SK-N-SH (cell line): ENCODE measurements at regions of chr17 and their contacts with region 1.

Region 1: GRCh38 chr17:44363613-44364159 is at the start of gene FAM171A2:
- DNase-seq: peak; percentile 97
- H3K4me3 ChIP-seq: peak within 1 kb of the TSS; percentile 80 to 89
- H3K27ac ChIP-seq: peak within 1 kb of the TSS in 1 of 2 experiments; percentile 76; a peak in 2 of 4 replicates
- H3K4me1 ChIP-seq: peaks cover 3 to 22% of the 10 kb centered on the region in 2 experiments; a peak in 1 of 4 replicates
- H3K27me3 ChIP-seq: no peaks in the 10 kb centered on the region; the same call in 1 of the 2 replicates
- CTCF ChIP-seq: peak; percentile 59
- EP300 ChIP-seq: no peak
- RAD21 ChIP-seq: peak; percentile 14; the same call in 1 of the 2 replicates
- polyA plus RNA-seq, gene FAM171A2: 4.8 and 4.9 TPM in 2 replicates

Region 2: DNA sequence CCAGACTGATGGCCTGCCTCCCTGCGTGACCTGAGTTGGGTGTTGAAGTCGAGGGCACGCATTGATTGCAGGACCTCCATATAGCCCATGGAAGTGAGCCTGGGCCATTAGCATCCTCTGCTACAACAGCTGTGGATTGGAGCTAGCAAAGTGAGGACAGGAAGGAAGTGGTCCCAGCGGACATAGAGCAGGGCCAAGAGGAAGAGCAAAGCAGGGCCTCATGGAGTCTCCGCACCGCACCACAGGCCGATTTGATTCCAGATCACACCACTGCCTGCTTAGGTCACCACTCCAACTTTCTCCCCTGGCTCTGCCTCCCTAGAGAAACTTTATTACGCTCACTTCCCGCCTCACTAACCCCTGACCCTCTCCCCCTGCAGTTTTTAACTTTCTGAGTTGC is 133.5 kb before region 1 on chr17:
- CTCF ChIA-PET with region 1: no interaction called
- POLR2A ChIA-PET with region 1: no interaction called
- DNase-seq: no peak
- H3K4me3 ChIP-seq: no peak overlapping the region
- H3K27ac ChIP-seq: no peak overlapping the region
- H3K4me1 ChIP-seq: 0 out of 4 replicates have a peak, but pooled peaks cover 0 to under 1% of the 10 kb centered on the region in 2 experiments
- H3K27me3 ChIP-seq: no peaks in the 10 kb centered on the region
- CTCF ChIP-seq: no peak
- EP300 ChIP-seq: no peak
- RAD21 ChIP-seq: no peak

Region 3: DNA sequence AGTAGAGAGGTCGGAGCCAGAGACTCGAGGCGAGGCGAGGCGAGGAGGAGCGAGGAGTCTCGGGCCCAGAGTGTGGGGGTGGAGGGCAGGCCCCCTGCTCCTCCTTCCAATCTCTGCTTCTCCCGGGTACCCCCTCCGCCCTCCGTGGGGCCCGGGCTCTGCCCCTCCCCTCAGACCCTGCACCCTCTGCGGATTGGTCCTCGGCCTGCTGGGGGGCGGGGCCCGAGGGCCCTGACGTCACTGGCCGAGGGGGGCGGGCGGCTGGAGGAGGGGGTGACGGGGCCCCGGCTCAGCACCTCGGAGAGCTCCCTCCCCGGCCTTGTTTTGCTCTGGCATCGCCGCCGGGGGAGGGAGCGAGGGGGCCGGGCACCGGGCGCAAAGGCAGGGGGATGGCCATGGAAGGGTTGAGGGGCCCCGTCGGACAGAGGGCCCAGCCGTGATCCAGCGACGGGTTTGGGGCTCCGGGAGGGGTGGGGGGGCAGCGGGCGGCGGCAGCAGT is 55.3 kb before region 1 on chr17 and contains the start of gene RUNDC3A:
- CTCF ChIA-PET with region 1: no interaction called
- POLR2A ChIA-PET with region 1: no interaction called
- DNase-seq: peak; percentile 100
- H3K4me3 ChIP-seq: peak within 1 kb of the TSS; percentile 52 to 60
- H3K27ac ChIP-seq: peak within 1 kb of the TSS; percentile 22 to 92; a peak in 3 of 4 replicates
- H3K4me1 ChIP-seq: peaks cover 0 to 31% of the 10 kb centered on the region in 2 experiments; a peak in 1 of 4 replicates
- H3K27me3 ChIP-seq: no peaks in the 10 kb centered on the region
- CTCF ChIP-seq: no peak
- EP300 ChIP-seq: no peak
- RAD21 ChIP-seq: no peak
- polyA plus RNA-seq, gene RUNDC3A: 8.9 and 11.0 TPM in 2 replicates

Region 4: GRCh38 chr17:44344939-44345453 is 18.7 kb before region 1 on chr17 and contains the start of gene GRN:
- CTCF ChIA-PET with region 1: interaction called, 85 read pairs
- POLR2A ChIA-PET with region 1: interaction called, 7 read pairs
- DNase-seq: peak; percentile 97
- H3K4me3 ChIP-seq: peak within 1 kb of the TSS; percentile 83 to 98
- H3K27ac ChIP-seq: peak within 1 kb of the TSS; percentile 40 to 66; a peak in 3 of 4 replicates
- H3K4me1 ChIP-seq: peaks cover 0 to 13% of the 10 kb centered on the region in 2 experiments; a peak in 1 of 4 replicates
- H3K27me3 ChIP-seq: no peaks in the 10 kb centered on the region
- CTCF ChIP-seq: no peak
- EP300 ChIP-seq: peak; percentile 53 to 60; a peak in 2 of 4 replicates
- RAD21 ChIP-seq: no peak
- polyA plus RNA-seq, gene GRN: 360 and 442 TPM in 2 replicates

Region 5: GRCh38 chr17:44350733-44351226 is 12.9 kb before region 1 on chr17:
- CTCF ChIA-PET with region 1: interaction called, 85 read pairs
- POLR2A ChIA-PET with region 1: interaction called, 11 read pairs
- DNase-seq: peak; percentile 96
- H3K4me3 ChIP-seq: peak overlapping the region in 1 of 2 experiments; percentile 26; a peak in 1 of 4 replicates
- H3K27ac ChIP-seq: no peak overlapping the region
- H3K4me1 ChIP-seq: peaks cover 0 to 7% of the 10 kb centered on the region in 2 experiments; a peak in 1 of 4 replicates
- H3K27me3 ChIP-seq: no peaks in the 10 kb centered on the region
- CTCF ChIP-seq: peak; percentile 74
- EP300 ChIP-seq: no peak
- RAD21 ChIP-seq: peak; percentile 79

Region 6: GRCh38 chr17:44376124-44376523 is 12.4 kb after region 1 on chr17:
- CTCF ChIA-PET with region 1: interaction called, 13 read pairs
- POLR2A ChIA-PET with region 1: no interaction called
- DNase-seq: peak; percentile 81
- H3K4me3 ChIP-seq: no peak overlapping the region; a peak in 1 of 4 replicates
- H3K27ac ChIP-seq: no peak overlapping the region
- H3K4me1 ChIP-seq: no peaks in the 10 kb centered on the region
- H3K27me3 ChIP-seq: no peaks in the 10 kb centered on the region
- CTCF ChIP-seq: peak; percentile 51
- EP300 ChIP-seq: no peak
- RAD21 ChIP-seq: no peak